ENCODE measurements at regions of chr6 and their contacts with region 1.

Region 1: GRCh38 chr6:26234421-26235296 is 130.3 kb upstream of the BTN3A2 start:
- DNase-seq: peak; percentile 86
- ATAC-seq: peak; percentile 65
- H3K4me3 Mint-ChIP-seq: peak overlapping the region; percentile 75
- H3K27ac Mint-ChIP-seq: peak overlapping the region; percentile 99
- H3K4me1 Mint-ChIP-seq: peaks cover 24% of the 10 kb centered on the region
- H3K27me3 Mint-ChIP-seq: peaks cover 5% of the 10 kb centered on the region
- CTCF ChIP-seq: no peak

Region 2: GRCh38 chr6:25793970-25794369 is 440.7 kb before region 1 on chr6:
- CTCF ChIA-PET with region 1: no interaction called
- POLR2A ChIA-PET with region 1: no interaction called
- intact Hi-C with region 1: no loop called
- DNase-seq: no peak
- ATAC-seq: no peak
- H3K4me3 Mint-ChIP-seq: no peak overlapping the region
- H3K27ac Mint-ChIP-seq: no peak overlapping the region
- H3K4me1 Mint-ChIP-seq: no peaks in the 10 kb centered on the region
- H3K27me3 Mint-ChIP-seq: peaks cover 3% of the 10 kb centered on the region
- CTCF ChIP-seq: no peak

Region 3: GRCh38 chr6:26045065-26045927 is 189.4 kb before region 1 on chr6:
- CTCF ChIA-PET with region 1: no interaction called
- POLR2A ChIA-PET with region 1: interaction called, 19 read pairs
- intact Hi-C with region 1: no loop called
- DNase-seq: peak; percentile 85
- ATAC-seq: peak; percentile 63
- H3K4me3 Mint-ChIP-seq: peak overlapping the region; percentile 76
- H3K27ac Mint-ChIP-seq: peak overlapping the region; percentile 96
- H3K4me1 Mint-ChIP-seq: peaks cover 10% of the 10 kb centered on the region
- H3K27me3 Mint-ChIP-seq: no peaks in the 10 kb centered on the region
- CTCF ChIP-seq: no peak

Region 4: GRCh38 chr6:26204332-26205165 is 30.1 kb before region 1 on chr6:
- CTCF ChIA-PET with region 1: no interaction called
- POLR2A ChIA-PET with region 1: interaction called, 351 read pairs
- intact Hi-C with region 1: loop called (anchors 5 kb)
- DNase-seq: peak; percentile 91
- ATAC-seq: peak; percentile 75
- H3K4me3 Mint-ChIP-seq: no peak overlapping the region
- H3K27ac Mint-ChIP-seq: no peak overlapping the region
- H3K4me1 Mint-ChIP-seq: peaks cover 17% of the 10 kb centered on the region
- H3K27me3 Mint-ChIP-seq: no peaks in the 10 kb centered on the region
- CTCF ChIP-seq: no peak

Region 5: DNA sequence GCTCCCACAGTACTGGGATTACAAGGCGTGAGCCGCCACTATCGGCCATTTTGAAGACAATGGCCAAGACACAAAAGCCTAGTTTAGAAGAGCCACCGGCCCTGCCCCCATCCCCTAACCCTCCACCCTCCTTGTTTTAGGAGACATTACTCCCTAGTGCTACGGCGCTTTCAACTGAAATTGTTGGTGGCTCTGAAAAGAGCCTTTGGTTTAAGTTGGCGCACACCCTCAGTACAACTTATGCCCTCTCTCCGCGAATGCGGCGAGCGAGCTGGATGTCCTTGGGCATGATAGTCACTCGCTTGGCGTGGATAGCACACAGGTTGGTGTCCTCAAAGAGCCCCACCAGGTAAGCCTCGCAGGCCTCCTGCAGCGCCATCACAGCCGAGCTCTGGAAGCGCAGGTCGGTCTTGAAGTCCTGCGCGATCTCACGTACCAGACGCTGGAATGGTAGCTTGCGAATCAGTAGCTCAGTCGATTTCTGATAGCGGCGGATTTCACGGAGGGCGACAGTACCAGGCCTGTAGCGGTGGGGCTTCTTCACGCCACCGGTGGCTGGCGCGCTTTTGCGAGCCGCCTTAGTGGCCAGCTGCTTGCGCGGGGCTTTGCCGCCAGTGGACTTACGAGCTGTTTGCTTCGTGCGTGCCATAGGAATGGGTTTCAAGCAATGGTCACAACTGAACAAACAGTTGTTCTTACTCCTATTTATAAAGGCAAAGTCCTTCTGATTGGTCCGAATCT is 15.5 kb after region 1 on chr6:
- CTCF ChIA-PET with region 1: interaction called, 18 read pairs
- POLR2A ChIA-PET with region 1: interaction called, 53 read pairs
- intact Hi-C with region 1: no loop called
- DNase-seq: peak; percentile 84
- ATAC-seq: peak; percentile 68
- H3K4me3 Mint-ChIP-seq: peak overlapping the region; percentile 82
- H3K27ac Mint-ChIP-seq: peak overlapping the region; percentile 99
- H3K4me1 Mint-ChIP-seq: peaks cover 27% of the 10 kb centered on the region
- H3K27me3 Mint-ChIP-seq: no peaks in the 10 kb centered on the region
- CTCF ChIP-seq: peak; percentile 43

Region 6: DNA sequence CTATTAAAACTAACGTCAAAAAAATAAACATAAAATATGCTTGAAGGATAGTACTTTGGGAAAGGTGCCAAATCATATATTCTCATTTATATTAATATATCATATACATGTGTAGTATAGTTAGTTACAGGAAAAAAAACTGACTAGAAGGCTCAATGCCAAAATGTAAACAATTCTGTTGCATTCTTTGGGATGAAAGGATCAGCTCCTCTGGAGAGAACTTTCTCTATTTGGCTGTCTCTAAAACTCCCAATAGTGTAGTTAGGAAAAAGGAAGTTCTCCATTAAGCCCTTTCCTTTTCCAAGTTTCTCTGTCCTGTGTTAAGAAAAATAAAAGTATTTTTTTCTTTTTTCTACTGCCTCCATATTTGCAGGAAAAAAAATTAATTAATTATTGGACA is 43.9 kb after region 1 on chr6:
- CTCF ChIA-PET with region 1: interaction called, 4 read pairs
- POLR2A ChIA-PET with region 1: interaction called, 203 read pairs
- intact Hi-C with region 1: no loop called
- DNase-seq: no peak
- ATAC-seq: no peak
- H3K4me3 Mint-ChIP-seq: no peak overlapping the region
- H3K27ac Mint-ChIP-seq: no peak overlapping the region
- H3K4me1 Mint-ChIP-seq: peaks cover 10% of the 10 kb centered on the region
- H3K27me3 Mint-ChIP-seq: no peaks in the 10 kb centered on the region
- CTCF ChIP-seq: no peak